ENCODE measurements at regions of chr12 and their contacts with region 1.

Region 1: GRCh38 chr12:59517522-59517921 is 78.3 kb upstream of the SLC16A7 start:
- DNase-seq: no peak
- ATAC-seq: no peak

Region 2: GRCh38 chr12:59459966-59460660 is 57.4 kb before region 1 on chr12:
- intact Hi-C with region 1: no loop called
- DNase-seq: no peak
- ATAC-seq: no peak

Region 3: DNA sequence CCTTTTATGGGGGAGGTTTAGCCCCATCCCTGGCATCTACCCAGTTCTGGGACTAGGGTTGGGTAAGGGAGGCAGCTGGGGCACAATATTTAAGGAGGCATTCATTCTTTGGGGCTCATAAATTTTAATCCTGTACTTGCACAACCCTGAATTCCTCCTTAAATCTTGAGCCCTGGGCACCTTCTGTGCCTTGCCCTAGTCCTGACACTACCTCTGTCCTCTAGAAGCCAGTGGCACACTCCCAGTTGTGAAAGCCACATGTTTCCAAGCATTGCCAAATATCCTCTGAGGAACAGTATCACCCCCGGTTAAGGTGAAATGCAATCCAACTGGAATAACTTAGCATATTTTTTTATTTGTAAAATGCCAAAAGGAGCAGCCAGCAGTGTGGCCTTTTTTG is 114.9 kb after region 1 on chr12:
- intact Hi-C with region 1: loop called (anchors 5 kb)
- DNase-seq: no peak
- ATAC-seq: peak; percentile 60